Naive thymus-derived CD4-positive, alpha-beta T cell (primary cell): ENCODE measurements at regions of chr1 and their contacts with region 1.

Region 1: DNA sequence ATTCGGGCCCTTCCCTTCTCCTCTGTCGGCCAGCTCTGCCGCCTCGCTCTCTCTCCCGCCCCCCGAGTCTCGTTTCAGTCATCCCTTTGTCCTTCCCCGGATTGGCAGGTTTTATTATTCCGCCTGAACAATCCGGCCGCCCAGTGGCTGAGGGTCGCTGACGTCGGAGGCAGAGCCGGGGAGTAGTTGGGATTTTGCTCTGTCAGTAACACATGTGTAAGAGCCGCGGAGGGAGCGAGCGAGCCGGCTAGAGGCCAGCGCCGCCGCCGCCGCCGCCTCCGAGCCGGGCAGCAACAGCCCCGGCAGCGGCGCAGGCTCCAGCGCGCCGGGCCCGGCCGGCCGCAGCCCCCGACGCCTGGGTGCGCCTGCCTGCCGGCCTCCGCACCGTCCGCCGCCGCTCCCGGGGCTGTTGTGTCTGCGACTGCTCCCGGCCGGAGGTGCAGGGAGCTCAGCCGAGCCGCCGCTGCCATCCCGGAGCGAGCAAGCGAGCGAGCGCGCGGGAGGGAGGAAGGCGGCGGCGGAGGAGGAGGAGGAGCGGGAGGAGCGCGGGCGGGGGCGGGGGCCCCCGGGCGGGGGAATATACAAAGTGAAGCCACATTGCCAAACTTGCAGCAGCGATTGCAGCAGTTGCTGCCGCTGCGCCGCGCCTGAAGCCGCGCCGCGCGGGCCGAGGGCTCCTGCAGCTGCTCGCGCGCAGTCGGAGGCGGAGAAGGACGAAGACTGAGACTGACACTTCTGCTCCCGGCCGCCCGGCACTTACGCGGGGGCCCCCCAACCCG is at the start of gene LMO4:
- DNase-seq: peak; percentile 57 to 80 (median 70)
- ATAC-seq: peak; percentile 83
- H3K4me3 ChIP-seq: peak within 1 kb of the TSS; percentile 44
- H3K4me3 Mint-ChIP-seq: peak within 1 kb of the TSS; percentile 85 to 97 (median 94)
- H3K27ac ChIP-seq: peak within 1 kb of the TSS; percentile 69
- H3K27ac Mint-ChIP-seq: peak within 1 kb of the TSS; percentile 70 to 98 (median 91)
- H3K4me1 ChIP-seq: peaks cover 19 to 21% of the 10 kb centered on the region in 2 donors
- H3K4me1 Mint-ChIP-seq: peaks cover 23 to 59% (median 42%) of the 10 kb centered on the region in 7 donors
- H3K27me3 ChIP-seq: peaks cover 0 to 6% of the 10 kb centered on the region in 2 donors
- H3K27me3 Mint-ChIP-seq: peaks cover 4 to 33% (median 16%) of the 10 kb centered on the region in 5 donors
- total RNA-seq, gene LMO4: 6.4 to 30.6 (median 9.4) TPM

Region 2: GRCh38 chr1:85707990-85708828 is 1620.3 kb before region 1 on chr1 and contains the start of gene ZNHIT6:
- CTCF ChIA-PET with region 1: no interaction called
- POLR2A ChIA-PET with region 1: no interaction called
- intact Hi-C with region 1: loop called in 1 of 2 experiments (anchors 2 kb)
- DNase-seq: peak; percentile 62 to 94 (median 89)
- ATAC-seq: peak; percentile 99
- H3K4me3 ChIP-seq: peak within 1 kb of the TSS; percentile 90
- H3K4me3 Mint-ChIP-seq: no peak within 1 kb of the TSS
- H3K27ac ChIP-seq: peak within 1 kb of the TSS; percentile 77
- H3K27ac Mint-ChIP-seq: no peak within 1 kb of the TSS
- H3K4me1 ChIP-seq: peaks cover 14 to 21% of the 10 kb centered on the region in 2 donors
- H3K4me1 Mint-ChIP-seq: peaks cover 11 to 33% (median 18%) of the 10 kb centered on the region in 7 donors
- H3K27me3 ChIP-seq: no peaks in the 10 kb centered on the region
- H3K27me3 Mint-ChIP-seq: no peaks in the 10 kb centered on the region
- total RNA-seq, gene ZNHIT6: 13.8 to 22.2 (median 20.2) TPM

Region 3: GRCh38 chr1:85900921-85901320 is 1427.5 kb before region 1 on chr1:
- CTCF ChIA-PET with region 1: no interaction called
- POLR2A ChIA-PET with region 1: no interaction called
- intact Hi-C with region 1: no loop called
- DNase-seq: no peak
- ATAC-seq: no peak
- H3K4me3 ChIP-seq: no peak overlapping the region
- H3K4me3 Mint-ChIP-seq: no peak overlapping the region
- H3K27ac ChIP-seq: no peak overlapping the region
- H3K27ac Mint-ChIP-seq: no peak overlapping the region
- H3K4me1 ChIP-seq: no peaks in the 10 kb centered on the region
- H3K4me1 Mint-ChIP-seq: no peaks in the 10 kb centered on the region
- H3K27me3 ChIP-seq: no peaks in the 10 kb centered on the region
- H3K27me3 Mint-ChIP-seq: peaks cover 0 to 4% (median 0%) of the 10 kb centered on the region in 5 donors

Region 4: DNA sequence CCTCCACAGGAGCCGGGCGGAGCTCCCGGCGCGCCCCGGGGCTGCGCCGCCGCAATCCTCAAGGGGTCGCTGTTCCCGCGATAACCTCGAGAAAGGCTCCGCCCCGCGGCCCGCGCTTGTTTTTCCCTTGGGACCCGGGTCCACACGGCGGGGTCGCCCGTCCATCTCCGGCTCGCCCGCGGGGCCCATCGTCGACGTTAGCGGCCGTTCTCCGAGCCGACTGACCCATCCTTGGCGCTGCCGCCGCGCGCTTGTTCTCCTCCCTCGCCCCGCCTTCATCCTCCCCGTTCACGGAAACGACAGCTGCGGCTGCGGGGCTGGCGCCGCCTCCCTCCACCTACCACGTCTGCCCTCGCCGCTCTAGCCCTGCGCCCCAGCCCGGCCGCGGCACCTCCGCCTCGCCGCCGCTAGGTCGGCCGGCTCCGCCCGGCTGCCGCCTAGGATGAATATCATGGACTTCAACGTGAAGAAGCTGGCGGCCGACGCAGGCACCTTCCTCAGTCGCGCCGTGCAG is 623.9 kb before region 1 on chr1 and contains the start of gene SH3GLB1:
- CTCF ChIA-PET with region 1: no interaction called
- POLR2A ChIA-PET with region 1: no interaction called
- intact Hi-C with region 1: loop called (anchors 1 to 10 kb)
- DNase-seq: peak; percentile 83 to 93 (median 92)
- ATAC-seq: peak; percentile 93
- H3K4me3 ChIP-seq: peak within 1 kb of the TSS; percentile 83
- H3K4me3 Mint-ChIP-seq: peak within 1 kb of the TSS; percentile 95 to 99 (median 97)
- H3K27ac ChIP-seq: peak within 1 kb of the TSS; percentile 86
- H3K27ac Mint-ChIP-seq: peak within 1 kb of the TSS; percentile 96 to 99 (median 97)
- H3K4me1 ChIP-seq: peaks cover 16 to 17% of the 10 kb centered on the region in 2 donors
- H3K4me1 Mint-ChIP-seq: peaks cover 34 to 67% (median 56%) of the 10 kb centered on the region in 7 donors
- H3K27me3 ChIP-seq: no peaks in the 10 kb centered on the region
- H3K27me3 Mint-ChIP-seq: no peaks in the 10 kb centered on the region
- total RNA-seq, gene SH3GLB1: 36.7 to 72.0 (median 49.8) TPM

Region 5: DNA sequence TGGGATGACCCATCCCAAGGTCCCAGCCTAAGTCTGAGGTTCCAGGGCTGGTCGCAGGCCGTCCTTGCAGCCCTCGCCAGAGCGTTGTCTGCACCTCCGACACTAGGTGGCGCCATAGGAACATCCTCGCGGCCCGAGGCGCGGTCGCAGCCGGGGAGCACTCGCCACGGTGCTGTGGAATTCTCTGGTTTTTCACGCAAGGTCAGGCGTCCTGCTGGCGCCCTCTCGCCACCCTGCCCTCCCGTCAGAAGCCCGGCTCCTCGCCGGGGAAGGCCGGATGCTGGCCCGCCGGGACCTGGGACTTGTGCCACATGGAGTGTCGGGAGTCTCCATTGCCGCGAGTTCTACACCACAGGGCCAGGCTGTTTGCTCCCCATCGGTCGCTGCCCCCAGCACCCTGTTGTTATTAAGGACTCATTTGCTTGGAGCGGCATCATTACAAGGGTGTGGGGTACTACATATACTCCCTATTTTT is 196.6 kb before region 1 on chr1:
- CTCF ChIA-PET with region 1: no interaction called
- POLR2A ChIA-PET with region 1: no interaction called
- intact Hi-C with region 1: loop called in 1 of 2 experiments (anchors 5 kb)
- DNase-seq: peak; percentile 35 to 80 (median 69)
- ATAC-seq: peak; percentile 94
- H3K4me3 ChIP-seq: peak overlapping the region; percentile 90
- H3K4me3 Mint-ChIP-seq: peak overlapping the region; percentile 79 to 88 (median 83)
- H3K27ac ChIP-seq: no peak overlapping the region
- H3K27ac Mint-ChIP-seq: no peak overlapping the region
- H3K4me1 ChIP-seq: no peaks in the 10 kb centered on the region
- H3K4me1 Mint-ChIP-seq: peaks cover 0 to 13% (median 9%) of the 10 kb centered on the region in 7 donors
- H3K27me3 ChIP-seq: no peaks in the 10 kb centered on the region
- H3K27me3 Mint-ChIP-seq: peaks cover 34 to 43% (median 40%) of the 10 kb centered on the region in 5 donors

Region 6: GRCh38 chr1:87450615-87451207 is 122.2 kb after region 1 on chr1:
- CTCF ChIA-PET with region 1: interaction called, 4 read pairs
- POLR2A ChIA-PET with region 1: no interaction called
- intact Hi-C with region 1: loop called (anchors 1 kb)
- DNase-seq: peak in 4 of 9 donors; percentile 1 to 9 (median 4)
- ATAC-seq: no peak
- H3K4me3 ChIP-seq: no peak overlapping the region
- H3K4me3 Mint-ChIP-seq: no peak overlapping the region
- H3K27ac ChIP-seq: no peak overlapping the region
- H3K27ac Mint-ChIP-seq: no peak overlapping the region
- H3K4me1 ChIP-seq: peaks cover 0 to 7% of the 10 kb centered on the region in 2 donors
- H3K4me1 Mint-ChIP-seq: peaks cover 0 to 3% (median 0%) of the 10 kb centered on the region in 7 donors
- H3K27me3 ChIP-seq: no peaks in the 10 kb centered on the region
- H3K27me3 Mint-ChIP-seq: peaks cover 0 to 8% (median 0%) of the 10 kb centered on the region in 5 donors

Region 7: GRCh38 chr1:87760155-87760554 is 431.7 kb after region 1 on chr1:
- CTCF ChIA-PET with region 1: no interaction called
- POLR2A ChIA-PET with region 1: no interaction called
- intact Hi-C with region 1: loop called in 1 of 2 experiments (anchors 5 kb)
- DNase-seq: no peak
- ATAC-seq: no peak
- H3K4me3 ChIP-seq: no peak overlapping the region
- H3K4me3 Mint-ChIP-seq: no peak overlapping the region
- H3K27ac ChIP-seq: no peak overlapping the region
- H3K27ac Mint-ChIP-seq: no peak overlapping the region
- H3K4me1 ChIP-seq: no peaks in the 10 kb centered on the region
- H3K4me1 Mint-ChIP-seq: peaks cover 0 to 13% (median 0%) of the 10 kb centered on the region in 7 donors
- H3K27me3 ChIP-seq: no peaks in the 10 kb centered on the region
- H3K27me3 Mint-ChIP-seq: peaks cover 0 to 10% (median 5%) of the 10 kb centered on the region in 5 donors

Region 8: DNA sequence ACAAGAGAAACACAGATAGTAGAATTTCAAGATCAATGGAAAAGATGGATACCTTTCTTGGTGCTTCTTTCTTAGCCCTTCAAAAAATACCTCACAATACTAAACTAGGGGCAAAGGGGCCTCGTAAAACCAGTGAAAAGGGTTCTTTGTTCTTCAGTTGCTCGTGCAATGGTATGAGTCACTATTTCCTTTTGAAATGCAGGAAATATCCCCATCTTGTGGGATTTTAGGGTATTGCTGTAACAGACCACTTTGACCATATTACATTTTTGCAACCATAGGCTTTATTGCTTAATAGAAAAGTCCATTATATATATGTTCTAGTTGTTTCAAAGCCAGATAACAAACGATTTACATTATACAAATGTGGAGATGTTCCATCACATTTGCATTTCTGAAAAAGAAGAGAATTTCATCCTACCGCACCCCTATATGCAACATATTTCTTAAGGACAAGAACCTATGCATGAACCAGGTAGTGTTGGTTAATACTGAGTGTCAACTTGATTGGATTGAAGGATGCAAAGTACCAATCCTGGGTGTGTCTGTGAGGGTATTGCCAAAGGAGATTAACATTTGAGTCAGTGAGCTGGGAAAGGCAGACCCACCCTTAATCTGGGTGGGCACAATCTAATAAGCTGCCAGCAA is 1267.0 kb after region 1 on chr1:
- CTCF ChIA-PET with region 1: no interaction called
- POLR2A ChIA-PET with region 1: no interaction called
- intact Hi-C with region 1: loop called in 1 of 2 experiments (anchors 1 kb)
- DNase-seq: peak in 7 of 9 donors; percentile 2 to 39 (median 23)
- ATAC-seq: peak; percentile 61
- H3K4me3 ChIP-seq: no peak overlapping the region
- H3K4me3 Mint-ChIP-seq: no peak overlapping the region
- H3K27ac ChIP-seq: no peak overlapping the region
- H3K27ac Mint-ChIP-seq: no peak overlapping the region
- H3K4me1 ChIP-seq: no peaks in the 10 kb centered on the region
- H3K4me1 Mint-ChIP-seq: no peaks in the 10 kb centered on the region
- H3K27me3 ChIP-seq: no peaks in the 10 kb centered on the region
- H3K27me3 Mint-ChIP-seq: peaks cover 0 to 20% (median 12%) of the 10 kb centered on the region in 5 donors